Activated CD8-positive, alpha-beta memory T cell treated with anti-CD3 and anti-CD28 coated beads, Interleukin-2, amount 10 ng/mL, durations not matched to agents 7 days and 5 days (primary cell): ENCODE measurements at regions of chr16 and their contacts with region 1.

Region 1: DNA sequence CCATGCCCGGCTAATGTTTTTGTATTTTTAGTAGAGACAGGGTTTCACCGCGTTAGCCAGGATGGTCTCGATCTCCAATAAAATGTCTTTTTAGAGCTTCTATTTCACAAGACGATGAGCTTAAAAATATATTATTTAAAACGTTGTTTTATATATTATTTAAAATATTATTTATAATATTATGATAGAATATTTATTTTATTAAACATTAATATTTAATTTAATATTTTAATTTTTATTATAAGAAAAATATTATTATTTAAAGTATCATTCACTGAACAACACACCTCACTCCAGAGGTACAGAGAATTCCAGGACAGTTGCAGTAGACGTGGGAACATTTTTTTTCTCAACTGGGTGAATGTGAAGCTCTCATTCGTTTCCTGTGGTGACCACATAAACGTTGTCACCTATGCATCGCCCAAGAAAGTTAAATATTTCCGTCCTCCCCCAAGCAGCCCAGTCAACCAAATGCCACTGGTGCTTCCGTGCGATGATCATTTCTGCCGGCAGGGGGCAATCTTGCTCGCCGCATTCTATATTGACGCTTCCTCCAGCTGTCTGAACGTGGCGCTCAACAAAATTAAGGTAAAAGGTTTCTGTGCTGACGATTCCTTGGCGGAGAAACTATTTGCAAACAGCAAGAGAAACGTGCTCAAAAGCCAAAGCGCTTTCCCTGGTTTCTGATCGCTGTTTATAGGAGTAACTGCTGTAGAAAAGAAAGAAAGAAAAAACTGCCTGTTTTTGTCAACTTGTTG is 41.7 kb upstream of the PRSS54 start:
- DNase-seq: peak; percentile 89
- ATAC-seq: peak; percentile 92
- H3K4me3 Mint-ChIP-seq: no peak overlapping the region
- H3K27ac Mint-ChIP-seq: no peak overlapping the region
- H3K4me1 Mint-ChIP-seq: peaks cover 5% of the 10 kb centered on the region
- H3K27me3 Mint-ChIP-seq: peaks cover 8% of the 10 kb centered on the region

Region 2: GRCh38 chr16:58324792-58325191 is 11.7 kb before region 1 on chr16:
- CTCF ChIA-PET with region 1: interaction called, 10 read pairs
- DNase-seq: no peak
- ATAC-seq: no peak
- H3K4me3 Mint-ChIP-seq: no peak overlapping the region
- H3K27ac Mint-ChIP-seq: no peak overlapping the region
- H3K4me1 Mint-ChIP-seq: no peaks in the 10 kb centered on the region
- H3K27me3 Mint-ChIP-seq: peaks cover 30% of the 10 kb centered on the region

Region 3: GRCh38 chr16:58442547-58442946 is 106.0 kb after region 1 on chr16:
- CTCF ChIA-PET with region 1: interaction called, 15 read pairs
- DNase-seq: no peak
- ATAC-seq: no peak
- H3K4me3 Mint-ChIP-seq: no peak overlapping the region
- H3K27ac Mint-ChIP-seq: no peak overlapping the region
- H3K4me1 Mint-ChIP-seq: no peaks in the 10 kb centered on the region
- H3K27me3 Mint-ChIP-seq: peaks cover 30% of the 10 kb centered on the region

Region 4: DNA sequence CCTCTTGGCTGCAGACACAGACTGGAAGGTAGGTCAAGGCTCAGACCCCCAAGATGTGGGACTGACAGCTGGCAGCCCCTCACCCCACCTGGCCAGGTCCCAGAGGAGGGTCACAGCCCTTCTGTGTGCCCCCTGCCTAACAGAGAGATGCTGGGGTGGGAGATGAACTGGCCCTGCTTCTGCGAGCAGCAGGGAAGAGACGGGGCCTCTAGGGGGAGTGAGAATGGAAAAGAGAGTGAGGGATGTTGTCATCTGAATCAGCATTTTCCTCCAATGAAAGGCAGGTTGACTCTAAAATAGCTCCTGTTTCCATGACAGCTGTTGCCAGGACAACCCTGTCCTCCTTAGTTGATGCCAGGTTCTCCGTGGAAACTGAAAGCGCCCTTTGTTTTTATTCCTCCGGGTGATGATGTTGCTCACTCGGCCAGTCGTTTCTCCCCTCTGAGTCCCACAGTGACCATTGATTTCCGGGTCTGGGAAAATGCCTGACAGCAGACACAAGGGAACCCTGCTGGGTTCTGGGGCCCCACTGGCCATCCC is 158.5 kb after region 1 on chr16:
- CTCF ChIA-PET with region 1: interaction called, 42 read pairs
- DNase-seq: peak; percentile 83
- ATAC-seq: peak; percentile 58
- H3K4me3 Mint-ChIP-seq: no peak overlapping the region
- H3K27ac Mint-ChIP-seq: no peak overlapping the region
- H3K4me1 Mint-ChIP-seq: peaks cover 16% of the 10 kb centered on the region
- H3K27me3 Mint-ChIP-seq: peaks cover 8% of the 10 kb centered on the region

Region 5: GRCh38 chr16:58755989-58756649 is 419.6 kb after region 1 on chr16:
- CTCF ChIA-PET with region 1: interaction called, 28 read pairs
- DNase-seq: peak; percentile 87
- ATAC-seq: peak; percentile 97
- H3K4me3 Mint-ChIP-seq: peak overlapping the region; percentile 6
- H3K27ac Mint-ChIP-seq: no peak overlapping the region
- H3K4me1 Mint-ChIP-seq: peaks cover 10% of the 10 kb centered on the region
- H3K27me3 Mint-ChIP-seq: peaks cover 8% of the 10 kb centered on the region